Lower leg skin (tissue), 4 donors: ENCODE measurements at regions of chr15 and their contacts with region 1.

Region 1: DNA sequence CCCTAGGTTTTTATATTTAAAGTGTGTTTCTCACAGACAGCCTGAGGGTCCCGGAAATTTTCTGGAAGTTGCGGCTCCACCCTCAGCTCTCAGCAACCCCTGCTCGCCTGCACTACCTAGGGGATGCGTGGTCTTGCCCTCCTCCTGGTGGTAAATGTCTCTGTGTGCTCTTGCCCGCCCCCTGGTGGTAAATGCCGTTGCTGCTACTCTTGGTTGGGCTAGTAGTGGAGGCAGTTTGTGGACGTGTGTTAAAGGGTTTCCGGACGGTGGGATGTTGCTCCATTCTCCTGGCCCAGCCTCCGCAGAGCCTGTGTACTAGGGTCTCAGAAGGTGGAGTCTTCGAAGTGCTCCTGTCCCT is 27.4 kb downstream of the STOML1 start:
- DNase-seq: peak; percentile 83 to 97
- H3K4me3 ChIP-seq: no peak overlapping the region
- CTCF ChIP-seq: peak in 1 of 3 donors; percentile 66
- POLR2A ChIP-seq: no peak

Region 2: GRCh38 chr15:73313861-73314260 is 650.9 kb before region 1 on chr15:
- intact Hi-C with region 1: no loop called
- DNase-seq: no peak
- H3K4me3 ChIP-seq: no peak overlapping the region
- CTCF ChIP-seq: no peak
- POLR2A ChIP-seq: no peak

Region 3: DNA sequence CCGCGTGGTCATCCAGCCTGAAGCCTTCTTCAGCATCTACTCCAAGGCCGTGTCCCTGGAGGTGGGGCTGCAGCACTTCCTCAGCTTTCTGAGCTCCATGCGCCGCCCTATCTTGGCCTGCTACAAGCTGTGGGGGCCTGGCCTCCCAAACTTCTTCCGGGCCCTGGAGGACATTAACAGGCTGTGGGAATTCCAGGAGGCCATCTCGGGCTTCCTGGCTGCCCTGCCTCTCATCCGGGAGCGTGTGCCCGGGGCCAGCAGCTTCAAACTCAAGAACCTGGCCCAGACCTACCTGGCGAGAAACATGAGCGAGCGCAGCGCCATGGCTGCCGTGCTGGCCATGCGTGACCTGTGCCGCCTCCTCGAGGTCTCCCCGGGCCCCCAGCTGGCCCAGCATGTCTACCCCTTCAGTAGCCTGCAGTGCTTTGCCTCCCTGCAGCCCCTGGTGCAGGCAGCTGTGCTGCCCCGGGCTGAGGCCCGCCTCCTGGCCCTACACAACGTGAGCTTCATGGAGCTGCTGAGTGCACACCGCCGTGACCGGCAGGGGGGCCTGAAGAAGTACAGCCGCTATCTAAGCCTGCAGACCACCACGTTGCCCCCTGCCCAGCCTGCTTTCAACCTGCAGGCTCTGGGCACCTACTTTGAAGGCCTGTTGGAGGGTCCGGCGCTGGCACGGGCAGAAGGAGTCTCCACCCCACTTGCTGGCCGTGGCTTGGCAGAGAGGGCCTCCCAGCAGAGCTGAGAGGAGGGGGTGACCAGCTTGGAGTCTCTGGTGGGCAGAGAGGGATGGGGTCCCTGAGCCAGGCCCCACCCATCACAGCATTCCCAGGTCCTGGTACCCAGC is 79.8 kb after region 1 on chr15:
- intact Hi-C with region 1: loop called (anchors 5 kb)
- DNase-seq: peak in 1 of 2 donors; percentile 79
- H3K4me3 ChIP-seq: no peak overlapping the region
- CTCF ChIP-seq: no peak
- POLR2A ChIP-seq: no peak

Region 4: DNA sequence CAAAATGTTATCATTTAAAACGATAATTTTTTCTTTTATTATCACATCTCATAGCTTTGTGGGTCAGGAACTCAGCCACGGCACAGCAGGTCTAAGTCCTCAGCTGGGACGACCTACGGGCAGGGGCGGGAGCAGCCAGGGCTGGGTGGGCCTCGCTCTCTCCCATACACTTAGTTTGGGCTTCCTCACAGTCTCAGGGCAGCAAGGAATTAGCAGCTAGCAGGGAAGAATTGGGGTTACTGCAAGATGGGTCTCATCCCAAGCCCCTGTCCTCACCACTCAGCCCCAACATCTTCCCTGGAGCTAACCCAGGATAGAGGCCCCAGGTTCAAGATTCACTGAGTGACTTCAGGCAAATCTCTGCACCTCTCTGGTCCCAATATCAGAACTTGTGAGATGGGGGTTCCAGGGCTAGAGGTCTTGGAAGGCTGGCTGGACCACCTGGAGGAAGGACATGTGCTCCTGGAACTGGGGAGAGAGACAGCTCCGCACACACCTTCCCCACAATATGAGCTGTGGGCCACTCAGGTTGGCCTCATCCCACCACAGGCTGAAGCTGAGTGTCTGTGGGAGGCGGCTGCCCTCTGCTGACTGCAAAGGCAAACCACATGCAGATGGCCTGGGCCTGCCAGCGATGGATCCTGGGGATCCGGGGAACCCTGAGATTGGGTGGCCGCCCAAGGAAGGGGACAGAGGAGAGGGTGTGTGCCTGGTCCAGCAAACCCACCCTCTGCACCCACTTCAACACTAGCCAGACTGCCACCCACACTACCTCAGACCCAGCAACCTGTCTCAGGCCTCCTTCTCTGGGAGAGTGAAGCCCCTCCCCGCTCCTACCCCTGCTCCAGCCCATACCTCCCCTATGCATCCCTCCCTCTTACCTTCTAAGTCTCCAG is 357.7 kb after region 1 on chr15:
- intact Hi-C with region 1: loop called (anchors 10 kb)
- DNase-seq: peak; percentile 31 to 93
- H3K4me3 ChIP-seq: no peak overlapping the region
- CTCF ChIP-seq: peak in 1 of 3 donors; percentile 52
- POLR2A ChIP-seq: no peak